ENCODE measurements at regions of chr4 and their contacts with region 1.

Region 1: DNA sequence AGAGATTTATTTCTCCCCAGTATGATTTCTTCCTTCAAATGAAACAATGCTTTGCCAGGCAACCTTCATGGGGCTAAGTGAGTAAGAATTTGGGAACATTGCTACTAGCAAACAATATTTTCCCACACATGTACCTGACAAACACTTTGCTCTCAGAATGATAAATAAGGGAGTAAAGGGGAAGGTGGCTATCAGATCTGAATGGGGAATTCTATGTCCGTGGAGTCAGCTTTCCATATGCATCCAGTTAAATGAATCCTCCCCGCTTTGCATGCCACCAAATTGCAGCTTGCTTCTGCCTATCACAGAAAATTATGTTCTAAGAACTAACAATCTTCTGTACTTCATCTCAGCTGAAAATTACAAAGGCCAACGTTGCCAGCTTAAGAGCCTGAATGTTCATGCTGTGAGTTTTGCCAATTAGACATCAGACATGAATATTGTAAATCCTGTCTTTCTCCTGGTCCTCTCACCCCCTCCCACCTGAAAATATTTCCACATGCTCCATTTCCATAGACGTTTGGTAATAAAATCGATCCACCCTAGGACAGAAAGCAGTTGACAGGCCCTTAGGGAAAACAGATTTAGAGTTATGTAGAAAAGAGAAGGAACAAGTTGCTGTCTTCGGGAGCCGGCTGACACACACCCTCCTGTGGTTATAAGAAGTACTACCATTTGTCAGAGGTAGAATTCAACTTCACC is 6.3 kb downstream of the MEPE start:
- DNase-seq: peak; percentile 71
- H3K4me3 ChIP-seq: no peak overlapping the region
- H3K27ac ChIP-seq: no peak overlapping the region
- H3K4me1 ChIP-seq: peaks cover 20% of the 10 kb centered on the region
- H3K27me3 ChIP-seq: no peaks in the 10 kb centered on the region

Region 2: DNA sequence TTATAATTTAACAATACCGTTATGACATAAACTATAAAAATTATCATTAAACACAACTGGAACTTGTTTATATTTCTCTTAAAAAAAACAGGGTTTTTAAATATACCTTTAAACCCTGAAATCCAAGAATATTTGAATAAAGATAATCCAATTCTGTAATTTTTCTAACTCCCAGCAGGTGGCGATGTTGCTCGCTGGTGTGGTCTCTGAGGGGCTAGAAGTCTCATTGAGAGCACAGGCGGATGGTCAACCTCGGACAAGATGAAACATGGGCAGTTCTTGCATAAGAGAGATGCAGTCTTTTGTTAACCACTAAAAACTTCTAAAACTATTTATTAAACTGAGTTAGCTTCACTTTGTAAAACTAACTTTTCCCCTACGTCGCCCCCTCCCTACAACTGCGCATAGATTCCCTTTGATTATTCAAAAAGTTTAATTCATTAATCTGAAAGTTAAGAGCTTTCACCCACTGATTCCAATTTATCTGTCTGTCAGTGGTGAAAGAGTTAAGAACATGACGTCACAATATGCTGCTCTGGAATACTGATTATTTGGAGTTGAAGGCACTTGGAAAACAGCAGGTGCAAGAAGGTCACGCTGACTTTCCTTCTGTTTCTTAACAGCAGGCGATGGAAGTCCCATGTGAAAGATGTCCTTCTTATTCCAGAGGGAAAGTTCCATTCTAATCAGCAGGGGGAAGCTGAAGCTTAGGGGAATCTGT is 159.4 kb before region 1 on chr4:
- in situ Hi-C with region 1: loop called (anchors 5 kb)
- DNase-seq: peak; percentile 68
- H3K4me3 ChIP-seq: no peak overlapping the region
- H3K27ac ChIP-seq: no peak overlapping the region
- H3K4me1 ChIP-seq: no peaks in the 10 kb centered on the region
- H3K27me3 ChIP-seq: no peaks in the 10 kb centered on the region

Region 3: DNA sequence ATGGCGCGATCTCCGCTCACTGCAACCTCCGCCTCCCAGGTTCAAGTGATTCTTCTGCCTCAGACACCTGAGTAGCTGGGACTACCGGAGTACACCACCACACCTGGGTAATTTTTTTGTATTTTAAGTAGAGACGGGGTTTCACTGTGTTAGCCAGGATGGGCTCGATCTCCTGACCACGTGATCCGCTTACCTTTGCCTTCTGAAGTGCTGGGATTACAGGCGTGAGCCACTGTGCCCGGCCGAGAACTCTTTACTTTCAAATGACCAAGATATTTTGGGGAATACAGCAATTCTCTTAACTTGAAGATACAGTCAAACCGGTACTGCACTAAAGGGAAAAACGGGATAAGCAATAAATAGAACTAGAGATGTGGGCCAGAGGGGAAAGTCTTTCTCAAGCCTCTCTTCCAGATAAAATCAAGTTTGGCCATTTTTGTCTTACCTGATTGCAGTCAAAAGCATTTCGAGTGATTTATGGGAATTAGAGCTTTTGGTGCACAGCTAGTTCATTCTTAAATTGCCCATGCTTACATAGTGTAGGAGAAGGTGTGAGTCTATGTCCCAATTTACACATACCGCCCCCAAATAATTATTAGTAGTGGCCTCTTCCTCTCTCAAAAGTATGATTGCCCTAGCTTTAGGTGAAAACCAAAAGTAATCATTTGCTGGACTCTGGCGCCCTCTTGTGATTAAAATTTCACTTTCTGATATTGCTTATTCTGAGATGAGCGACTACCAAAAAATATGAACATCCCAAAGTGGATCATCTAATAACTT is 372.6 kb after region 1 on chr4:
- in situ Hi-C with region 1: no loop called
- DNase-seq: peak; percentile 55
- H3K4me3 ChIP-seq: no peak overlapping the region
- H3K27ac ChIP-seq: no peak overlapping the region
- H3K4me1 ChIP-seq: no peaks in the 10 kb centered on the region
- H3K27me3 ChIP-seq: 0 out of 2 replicates have a peak, but pooled peaks cover 5% of the 10 kb centered on the region